Activated CD4-positive, alpha-beta memory T cell treated with anti-CD3 and anti-CD28 coated beads for 36 hours (primary cell): ENCODE measurements at regions of chr3 and their contacts with region 1.

Region 1: GRCh38 chr3:72339116-72340030 is 508.9 kb downstream of the SHQ1 start:
- DNase-seq: no peak
- H3K4me3 Mint-ChIP-seq: no peak overlapping the region
- H3K27ac Mint-ChIP-seq: no peak overlapping the region
- H3K4me1 Mint-ChIP-seq: peaks cover 27% of the 10 kb centered on the region
- H3K27me3 Mint-ChIP-seq: no peaks in the 10 kb centered on the region

Region 2: DNA sequence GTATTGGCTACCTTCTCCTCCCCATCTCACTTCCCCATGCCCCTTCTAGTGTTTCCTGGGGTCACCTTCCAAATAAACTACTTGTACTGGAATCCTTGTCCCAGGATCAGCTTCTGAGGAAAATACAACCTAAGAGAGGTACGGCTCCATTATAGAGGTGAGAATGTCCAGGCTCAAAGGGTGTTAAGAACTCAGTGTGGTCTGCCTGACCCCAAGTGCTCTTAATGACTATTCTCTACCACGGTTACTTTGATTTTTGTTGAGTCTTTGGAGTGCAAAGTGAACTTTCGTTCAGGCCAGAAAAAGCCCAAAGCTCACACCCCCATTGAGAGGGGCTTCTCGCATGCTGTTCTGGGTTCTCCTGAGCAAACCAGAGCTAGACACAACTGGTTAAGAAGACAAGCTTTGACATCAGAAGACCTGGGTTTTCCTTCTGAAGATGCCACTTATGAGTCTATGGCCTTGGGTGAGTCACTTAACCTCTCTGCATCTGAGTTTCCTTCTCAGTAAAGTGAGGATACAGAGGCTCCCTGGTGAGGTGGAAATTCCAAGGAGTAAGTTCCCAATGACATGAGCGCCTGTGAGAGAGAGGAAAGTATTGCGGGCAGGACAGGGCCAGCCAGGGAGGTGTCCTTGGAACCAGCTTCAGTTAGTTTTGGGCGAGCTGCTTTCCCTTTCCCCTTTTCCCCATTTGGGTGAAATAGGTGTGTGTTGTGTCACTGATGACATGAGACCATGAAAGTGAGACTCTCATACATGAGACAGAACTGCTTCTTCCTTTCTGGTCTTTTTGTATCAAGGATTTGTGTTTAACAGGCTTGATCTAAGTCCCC is 79.4 kb before region 1 on chr3:
- CTCF ChIA-PET with region 1: no interaction called
- POLR2A ChIA-PET with region 1: no interaction called
- intact Hi-C with region 1: loop called (anchors 2 kb)
- DNase-seq: peak; percentile 53
- H3K4me3 Mint-ChIP-seq: no peak overlapping the region
- H3K27ac Mint-ChIP-seq: peak overlapping the region; percentile 61
- H3K4me1 Mint-ChIP-seq: peaks cover 38% of the 10 kb centered on the region
- H3K27me3 Mint-ChIP-seq: peaks cover 12% of the 10 kb centered on the region

Region 3: DNA sequence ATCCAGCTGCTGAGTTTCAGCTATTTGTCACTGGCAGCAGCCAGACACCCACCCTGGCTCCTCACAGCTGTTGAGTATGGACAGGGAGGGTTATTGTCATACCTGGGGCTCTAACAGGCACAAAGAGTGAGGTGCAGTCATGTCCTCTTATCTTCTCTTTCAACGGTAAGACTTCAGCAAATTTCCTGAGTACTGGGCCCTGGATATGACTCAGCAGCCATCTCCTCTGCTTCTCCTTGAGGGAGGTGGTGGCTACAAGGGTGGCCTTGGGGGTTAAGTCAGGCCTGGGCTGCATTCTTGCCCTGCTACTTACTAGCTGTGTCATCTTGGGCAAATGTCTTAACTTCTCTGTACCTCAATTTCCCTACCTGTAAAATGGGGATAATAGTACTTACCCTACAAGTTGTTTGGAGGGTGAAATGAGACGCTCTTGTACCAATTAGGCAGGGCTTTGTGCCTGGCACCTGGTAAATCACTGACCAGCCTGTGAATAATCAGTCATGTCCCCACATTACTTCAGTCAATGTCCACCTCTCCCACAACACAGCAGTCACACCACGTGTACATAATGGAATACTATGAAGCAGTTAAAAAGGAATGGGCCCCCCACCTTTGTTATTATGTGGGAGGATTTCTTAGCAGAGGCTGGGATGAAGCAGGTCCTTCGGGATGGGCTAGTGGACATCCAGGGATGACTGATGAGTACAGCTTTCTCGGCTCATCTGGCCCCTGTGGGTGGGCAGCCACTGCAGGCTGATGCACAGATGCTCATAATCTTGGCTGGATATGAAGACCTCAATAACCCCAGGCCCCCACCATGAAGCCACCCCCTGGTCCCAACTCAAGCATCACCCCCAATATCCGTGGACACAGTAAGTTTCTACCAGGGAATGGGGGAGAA is 19.9 kb before region 1 on chr3:
- CTCF ChIA-PET with region 1: no interaction called
- POLR2A ChIA-PET with region 1: no interaction called
- intact Hi-C with region 1: no loop called
- DNase-seq: no peak
- H3K4me3 Mint-ChIP-seq: no peak overlapping the region
- H3K27ac Mint-ChIP-seq: no peak overlapping the region
- H3K4me1 Mint-ChIP-seq: no peaks in the 10 kb centered on the region
- H3K27me3 Mint-ChIP-seq: no peaks in the 10 kb centered on the region

Region 4: GRCh38 chr3:72426618-72427397 is 87.4 kb after region 1 on chr3:
- CTCF ChIA-PET with region 1: no interaction called
- POLR2A ChIA-PET with region 1: no interaction called
- intact Hi-C with region 1: loop called (anchors 5 kb)
- DNase-seq: no peak
- H3K4me3 Mint-ChIP-seq: peak overlapping the region; percentile 23
- H3K27ac Mint-ChIP-seq: peak overlapping the region; percentile 82
- H3K4me1 Mint-ChIP-seq: peaks cover 78% of the 10 kb centered on the region
- H3K27me3 Mint-ChIP-seq: no peaks in the 10 kb centered on the region

Region 5: DNA sequence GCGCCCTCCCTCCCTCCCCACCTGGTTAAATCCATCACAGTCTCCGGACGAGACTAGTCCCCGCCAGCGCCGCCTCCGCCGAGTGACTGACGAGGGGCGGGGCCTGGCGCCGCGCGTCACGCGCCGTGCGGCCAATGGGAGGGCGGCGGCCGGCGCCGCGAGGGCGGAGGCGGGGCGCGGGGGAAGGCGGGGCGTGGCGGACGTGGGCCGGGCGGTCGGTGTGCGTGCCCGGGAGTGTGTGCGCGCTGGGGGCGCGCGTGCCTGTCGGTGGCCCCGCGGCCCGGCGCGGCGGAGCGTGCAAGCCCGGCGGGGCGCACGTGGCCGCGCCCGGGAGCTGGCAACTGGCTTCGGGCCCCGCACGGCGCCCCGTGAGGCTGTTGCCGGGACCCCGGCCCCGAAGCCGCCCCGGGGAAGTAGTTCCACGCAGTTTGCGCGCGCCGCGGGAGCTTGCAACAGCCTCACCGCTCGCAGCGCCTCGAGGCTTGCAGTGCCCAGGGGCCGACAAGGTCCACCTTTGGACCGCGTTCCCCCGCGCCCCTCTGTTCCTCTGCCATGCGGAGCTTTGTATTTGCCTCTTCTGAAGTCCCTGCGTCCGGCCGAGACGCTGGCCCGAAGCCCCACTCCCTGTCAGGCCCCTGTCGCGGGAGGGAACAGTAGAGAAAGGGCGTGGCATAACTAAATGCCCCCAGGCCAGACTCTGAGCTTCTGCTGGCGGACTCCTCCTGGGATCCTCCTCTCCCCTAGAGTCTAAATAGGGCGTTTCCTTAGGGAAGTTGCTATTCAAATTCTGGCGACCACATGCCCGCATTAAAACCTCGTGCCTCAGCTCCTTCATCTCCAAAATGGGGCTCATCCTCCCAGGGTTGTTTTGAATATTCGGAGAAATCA is 107.9 kb after region 1 on chr3:
- CTCF ChIA-PET with region 1: no interaction called
- POLR2A ChIA-PET with region 1: no interaction called
- intact Hi-C with region 1: loop called (anchors 2 kb)
- DNase-seq: peak; percentile 93
- H3K4me3 Mint-ChIP-seq: peak overlapping the region; percentile 61
- H3K27ac Mint-ChIP-seq: no peak overlapping the region
- H3K4me1 Mint-ChIP-seq: peaks cover 34% of the 10 kb centered on the region
- H3K27me3 Mint-ChIP-seq: peaks cover 23% of the 10 kb centered on the region